Mammary epithelial cell (primary cell): ENCODE measurements at regions of chr12 and their contacts with region 1.

Region 1: DNA sequence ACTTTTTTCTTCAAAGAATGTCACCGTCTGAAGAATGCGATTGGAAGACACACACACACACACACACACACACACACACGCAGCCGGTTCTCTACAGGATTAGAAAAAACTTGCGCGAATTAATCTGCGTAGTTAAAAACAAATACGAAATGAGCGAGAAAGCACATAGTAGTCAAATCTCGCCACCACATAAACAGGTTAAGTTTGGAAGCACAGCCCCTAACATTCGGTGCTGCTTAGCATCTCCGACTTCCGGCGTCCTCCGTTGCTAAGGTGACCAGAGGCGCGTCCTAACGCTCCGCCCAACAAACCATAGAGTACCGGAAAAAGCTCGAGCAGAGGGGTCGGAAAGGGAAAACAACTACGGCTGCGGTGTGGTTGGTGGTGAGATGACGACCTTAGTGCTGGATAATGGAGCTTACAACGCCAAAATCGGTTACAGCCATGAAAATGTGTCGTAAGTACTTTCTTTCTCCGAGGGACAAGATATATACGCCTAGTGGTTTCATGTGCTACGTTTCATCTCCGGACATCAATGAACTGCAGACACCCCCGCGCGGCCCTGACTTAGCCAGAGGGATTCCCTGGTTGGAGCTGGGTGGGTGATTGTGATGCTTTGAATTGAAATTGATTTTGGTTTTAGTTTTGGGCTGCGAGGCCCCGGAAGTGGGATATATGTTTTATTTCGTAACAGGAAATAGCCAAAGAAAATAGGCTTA is at the start of gene ACTR6:
- DNase-seq: peak; percentile 95
- H3K4me3 ChIP-seq: peak within 1 kb of the TSS; percentile 64 to 97 (median 88)
- H3K27ac ChIP-seq: peak within 1 kb of the TSS; percentile 73
- H3K4me1 ChIP-seq: peaks cover 8% of the 10 kb centered on the region
- H3K27me3 ChIP-seq: no peaks in the 10 kb centered on the region
- CTCF ChIP-seq: peak in 1 of 2 donors; percentile 3
- total RNA-seq, gene ACTR6: 24.5 to 25.0 TPM

Region 2: GRCh38 chr12:100058482-100059029 is 142.1 kb before region 1 on chr12:
- CTCF ChIA-PET with region 1: no interaction called
- dilution Hi-C with region 1: no loop called
- in situ Hi-C with region 1: no loop called
- intact Hi-C with region 1: loop called (anchors 5 kb)
- DNase-seq: peak; percentile 86
- H3K4me3 ChIP-seq: no peak overlapping the region
- H3K27ac ChIP-seq: no peak overlapping the region
- H3K4me1 ChIP-seq: peaks cover 3% of the 10 kb centered on the region
- H3K27me3 ChIP-seq: no peaks in the 10 kb centered on the region
- CTCF ChIP-seq: peak; percentile 15 to 32

Region 3: DNA sequence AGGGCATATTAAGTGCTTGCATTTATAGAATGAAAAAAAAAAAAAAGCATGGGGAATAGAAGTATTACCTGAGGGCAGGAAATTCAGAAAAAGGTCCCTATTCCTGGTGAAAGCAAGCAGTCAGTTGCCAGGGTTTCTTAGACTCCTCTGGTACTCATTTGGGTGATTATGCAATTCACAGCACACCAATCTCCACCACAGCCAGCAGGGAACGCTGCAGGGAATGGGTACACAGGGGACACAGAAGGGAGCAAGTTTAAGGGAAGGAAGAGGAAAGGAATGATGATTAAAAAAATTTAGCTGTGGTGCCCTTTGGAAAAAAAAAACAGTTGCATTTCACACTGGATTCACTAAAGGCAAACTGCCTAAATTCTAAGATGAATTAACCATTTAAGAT is 72.1 kb before region 1 on chr12:
- CTCF ChIA-PET with region 1: no interaction called
- dilution Hi-C with region 1: no loop called
- in situ Hi-C with region 1: no loop called
- intact Hi-C with region 1: loop called (anchors 1 kb)
- DNase-seq: peak; percentile 65
- H3K4me3 ChIP-seq: peak overlapping the region in 1 of 3 experiments; percentile 35
- H3K27ac ChIP-seq: peak overlapping the region; percentile 34
- H3K4me1 ChIP-seq: peaks cover 19% of the 10 kb centered on the region
- H3K27me3 ChIP-seq: no peaks in the 10 kb centered on the region
- CTCF ChIP-seq: peak; percentile 55 to 70

Region 4: DNA sequence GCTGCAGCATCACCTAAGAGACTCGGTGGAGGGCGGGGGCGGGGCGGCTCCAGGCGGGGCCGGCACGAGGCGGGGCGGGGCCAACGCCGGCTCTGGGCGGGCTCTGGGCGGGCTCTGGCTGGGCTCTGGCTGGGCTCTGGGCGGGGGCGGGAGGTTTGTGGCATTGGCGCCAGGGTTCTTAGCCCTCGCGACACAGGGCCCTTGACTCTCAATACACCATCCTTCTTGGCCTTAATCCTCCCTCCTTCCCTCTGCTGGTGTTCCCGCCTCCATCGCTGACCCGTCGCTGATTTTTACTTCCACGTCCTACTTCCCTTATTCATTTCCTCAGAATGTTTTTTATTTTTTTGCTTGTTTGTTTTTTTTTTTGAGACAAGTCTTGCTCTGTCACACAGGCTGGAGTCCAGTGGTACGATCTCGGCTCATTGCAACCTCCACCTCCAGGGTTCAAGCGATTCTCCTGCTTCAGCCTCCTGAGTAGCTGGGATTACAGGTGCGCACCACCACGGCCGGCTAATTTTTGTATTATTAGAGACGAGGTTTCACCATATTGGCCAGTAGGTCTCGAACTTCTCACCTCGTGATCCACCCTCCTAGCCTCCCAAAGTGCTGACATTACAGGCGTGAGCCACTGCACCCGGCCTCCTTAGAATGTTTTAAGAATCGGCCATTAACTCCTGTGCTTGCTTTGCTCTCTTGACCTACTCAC is 57.6 kb before region 1 on chr12 and contains the start of gene BLTP3B:
- CTCF ChIA-PET with region 1: no interaction called
- dilution Hi-C with region 1: no loop called
- in situ Hi-C with region 1: no loop called
- intact Hi-C with region 1: loop called (anchors 1 kb)
- DNase-seq: peak; percentile 69
- H3K4me3 ChIP-seq: peak within 1 kb of the TSS; percentile 92 to 99 (median 99)
- H3K27ac ChIP-seq: peak within 1 kb of the TSS; percentile 93
- H3K4me1 ChIP-seq: peaks cover 9% of the 10 kb centered on the region
- H3K27me3 ChIP-seq: no peaks in the 10 kb centered on the region
- CTCF ChIP-seq: no peak
- total RNA-seq, gene BLTP3B: 18.8 to 30.2 TPM

Region 5: GRCh38 chr12:100266835-100267618 is 66.4 kb after region 1 on chr12 and contains the starts of genes DEPDC4 and SCYL2:
- CTCF ChIA-PET with region 1: no interaction called
- dilution Hi-C with region 1: no loop called
- in situ Hi-C with region 1: no loop called
- intact Hi-C with region 1: loop called (anchors 2 kb)
- DNase-seq: peak; percentile 99
- H3K4me3 ChIP-seq: peak within 1 kb of the TSS; percentile 75 to 88 (median 84)
- H3K27ac ChIP-seq: peak within 1 kb of the TSS; percentile 94
- H3K4me1 ChIP-seq: peaks cover 12% of the 10 kb centered on the region
- H3K27me3 ChIP-seq: no peaks in the 10 kb centered on the region
- CTCF ChIP-seq: no peak
- total RNA-seq, gene DEPDC4: 0.83 to 2.4 TPM
- total RNA-seq, gene SCYL2: 56.6 to 58.7 TPM